ENCODE measurements at regions of chr9 and their contacts with region 1.

Region 1: GRCh38 chr9:136814725-136815421 is 7.1 kb downstream of the RABL6 start:
- DNase-seq: no peak
- H3K4me3 ChIP-seq: no peak overlapping the region
- H3K27ac ChIP-seq: no peak overlapping the region
- H3K4me1 ChIP-seq: peaks cover 4% of the 10 kb centered on the region
- H3K27me3 ChIP-seq: no peaks in the 10 kb centered on the region
- CTCF ChIP-seq: no peak

Region 2: GRCh38 chr9:136625101-136626060 is 189.5 kb before region 1 on chr9:
- CTCF ChIA-PET with region 1: no interaction called
- dilution Hi-C with region 1: no loop called
- in situ Hi-C with region 1: no loop called
- intact Hi-C with region 1: no loop called
- DNase-seq: peak; percentile 58
- H3K4me3 ChIP-seq: no peak overlapping the region
- H3K27ac ChIP-seq: no peak overlapping the region
- H3K4me1 ChIP-seq: peaks cover 54% of the 10 kb centered on the region
- H3K27me3 ChIP-seq: no peaks in the 10 kb centered on the region
- CTCF ChIP-seq: peak; percentile 18 to 67

Region 3: DNA sequence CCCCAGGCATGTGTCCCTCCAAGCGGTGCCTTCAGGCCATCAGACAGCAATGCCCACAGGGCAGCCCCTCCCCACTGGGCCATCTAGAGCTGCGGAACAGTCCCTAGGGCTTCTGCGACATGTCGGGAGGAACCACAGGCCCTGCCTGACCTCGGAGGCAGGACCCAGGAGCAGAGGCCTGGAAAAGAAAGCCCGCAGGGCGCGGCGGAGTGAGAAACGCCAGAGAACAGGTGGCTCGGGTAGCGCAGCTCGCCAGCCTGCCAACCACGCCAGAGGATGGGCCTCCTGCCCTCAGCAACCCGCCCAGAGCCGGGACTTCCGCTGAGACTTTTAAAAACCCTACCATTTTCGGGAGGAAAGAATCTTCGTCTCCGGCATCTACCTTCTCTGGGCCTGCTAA is 57.5 kb before region 1 on chr9:
- CTCF ChIA-PET with region 1: no interaction called
- dilution Hi-C with region 1: loop called (anchors 5 kb)
- in situ Hi-C with region 1: no loop called
- intact Hi-C with region 1: no loop called
- DNase-seq: no peak
- H3K4me3 ChIP-seq: no peak overlapping the region
- H3K27ac ChIP-seq: no peak overlapping the region
- H3K4me1 ChIP-seq: peaks cover 4% of the 10 kb centered on the region
- H3K27me3 ChIP-seq: peaks cover 4% of the 10 kb centered on the region
- CTCF ChIP-seq: no peak

Region 4: GRCh38 chr9:137086531-137087408 is 271.9 kb after region 1 on chr9 and contains the start of gene MAN1B1:
- CTCF ChIA-PET with region 1: no interaction called
- dilution Hi-C with region 1: no loop called
- in situ Hi-C with region 1: no loop called
- intact Hi-C with region 1: no loop called
- DNase-seq: peak; percentile 100
- H3K4me3 ChIP-seq: peak within 1 kb of the TSS; percentile 83 to 85 (median 85)
- H3K27ac ChIP-seq: peak within 1 kb of the TSS; percentile 83
- H3K4me1 ChIP-seq: peaks cover 46% of the 10 kb centered on the region
- H3K27me3 ChIP-seq: no peaks in the 10 kb centered on the region
- CTCF ChIP-seq: no peak
- total RNA-seq, gene MAN1B1: 62.3 to 67.0 TPM